ENCODE measurements at regions of chr7 and their contacts with region 1.

Region 1: GRCh38 chr7:132318352-132319318 is 257.6 kb downstream of the PLXNA4 start:
- DNase-seq: peak; percentile 16
- H3K4me3 ChIP-seq: no peak overlapping the region
- CTCF ChIP-seq: peak; percentile 89

Region 2: DNA sequence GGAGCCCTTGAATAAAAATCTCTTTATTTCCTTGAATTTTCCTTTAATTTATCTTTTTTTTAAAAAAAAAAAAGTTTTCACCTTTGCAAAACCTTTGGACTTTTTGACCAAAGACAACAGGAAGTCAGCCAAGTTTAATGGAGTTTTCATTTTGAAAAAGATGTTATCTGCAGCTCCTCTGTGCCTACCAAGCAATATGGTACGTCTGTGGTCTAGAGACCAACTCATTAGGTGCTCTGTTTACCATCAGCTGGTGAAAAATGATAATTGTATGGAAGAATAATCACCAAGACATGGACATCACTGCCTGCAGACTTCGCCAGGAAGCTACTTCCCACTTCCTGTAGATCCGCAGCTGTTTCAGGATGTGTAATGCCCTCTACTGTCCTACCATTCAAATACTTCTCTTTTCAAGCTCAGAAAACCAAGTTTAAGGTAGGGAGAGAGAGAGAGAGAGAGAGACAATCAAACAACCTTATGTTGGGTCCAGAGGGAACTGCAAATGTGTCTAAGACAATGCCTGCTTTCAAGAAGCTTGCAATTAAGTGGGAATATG is 238.9 kb after region 1 on chr7:
- CTCF ChIA-PET with region 1: interaction called, 11 read pairs
- POLR2A ChIA-PET with region 1: no interaction called
- DNase-seq: no peak
- H3K4me3 ChIP-seq: no peak overlapping the region
- CTCF ChIP-seq: no peak

Measured in AG04449 (cell line).